Panc1 (cell line): ENCODE measurements at regions of chr3 and their contacts with region 1.

Region 1: GRCh38 chr3:33775363-33775762 is 23.1 kb upstream of the PDCD6IP start:
- DNase-seq: no peak
- ATAC-seq: no peak
- H3K4me3 ChIP-seq: no peak overlapping the region
- H3K27ac ChIP-seq: no peak overlapping the region
- H3K4me1 ChIP-seq: no peaks in the 10 kb centered on the region
- H3K27me3 ChIP-seq: no peaks in the 10 kb centered on the region
- CTCF ChIP-seq: no peak

Region 2: GRCh38 chr3:33717866-33718594 is 57.3 kb before region 1 on chr3 and contains the start of gene CLASP2:
- CTCF ChIA-PET with region 1: no interaction called
- POLR2A ChIA-PET with region 1: no interaction called
- in situ Hi-C with region 1: no loop called
- intact Hi-C with region 1: loop called (anchors 5 kb)
- DNase-seq: peak; percentile 24
- ATAC-seq: peak; percentile 98
- H3K4me3 ChIP-seq: peak within 1 kb of the TSS; percentile 73 to 78
- H3K27ac ChIP-seq: peak within 1 kb of the TSS; percentile 88
- H3K4me1 ChIP-seq: peaks cover 3% of the 10 kb centered on the region; the same call in 1 of the 2 replicates
- H3K27me3 ChIP-seq: no peaks in the 10 kb centered on the region
- CTCF ChIP-seq: no peak
- total RNA-seq, gene CLASP2: 40.4 TPM

Region 3: DNA sequence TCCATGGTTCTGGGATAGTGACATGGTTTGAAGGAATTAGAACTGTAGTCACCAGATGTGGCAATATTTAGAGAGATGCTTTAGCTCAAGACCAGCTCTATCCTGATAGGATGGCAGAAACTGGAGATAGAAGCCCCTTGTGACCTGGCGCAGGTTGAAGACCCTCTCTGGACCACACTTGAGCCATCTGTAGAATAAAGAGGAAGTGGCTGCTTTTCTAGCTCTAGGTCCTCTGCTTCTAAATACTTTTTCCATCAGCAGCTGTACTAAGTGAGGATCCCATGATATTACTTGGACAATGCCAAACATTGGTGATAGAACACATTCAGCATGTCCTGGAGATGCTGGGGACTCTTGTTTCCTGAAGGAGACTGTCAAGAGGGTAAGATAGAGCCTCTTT is 195.7 kb after region 1 on chr3:
- CTCF ChIA-PET with region 1: no interaction called
- POLR2A ChIA-PET with region 1: no interaction called
- in situ Hi-C with region 1: no loop called
- intact Hi-C with region 1: no loop called
- DNase-seq: no peak
- ATAC-seq: no peak
- H3K4me3 ChIP-seq: no peak overlapping the region
- H3K27ac ChIP-seq: no peak overlapping the region
- H3K4me1 ChIP-seq: no peaks in the 10 kb centered on the region
- H3K27me3 ChIP-seq: no peaks in the 10 kb centered on the region
- CTCF ChIP-seq: no peak